B cell (primary cell): ENCODE measurements at regions of chr20 and their contacts with region 1.

Region 1: GRCh38 chr20:48620519-48621254 is 207.1 kb downstream of the PREX1 start:
- DNase-seq: peak; percentile 81
- ATAC-seq: peak; percentile 89
- H3K4me3 ChIP-seq: peak overlapping the region in 1 of 5 experiments; percentile 23
- H3K4me3 Mint-ChIP-seq: peak overlapping the region; percentile 75
- H3K27ac ChIP-seq: no peak overlapping the region
- H3K27ac Mint-ChIP-seq: peak overlapping the region; percentile 17
- H3K4me1 ChIP-seq: peaks cover 5 to 15% of the 10 kb centered on the region in 2 donors
- H3K4me1 Mint-ChIP-seq: peaks cover 8% of the 10 kb centered on the region
- H3K27me3 ChIP-seq: peaks cover 0 to 5% (median 0%) of the 10 kb centered on the region in 4 experiments
- H3K27me3 Mint-ChIP-seq: no peaks in the 10 kb centered on the region
- CTCF ChIP-seq: peak; percentile 93

Region 2: DNA sequence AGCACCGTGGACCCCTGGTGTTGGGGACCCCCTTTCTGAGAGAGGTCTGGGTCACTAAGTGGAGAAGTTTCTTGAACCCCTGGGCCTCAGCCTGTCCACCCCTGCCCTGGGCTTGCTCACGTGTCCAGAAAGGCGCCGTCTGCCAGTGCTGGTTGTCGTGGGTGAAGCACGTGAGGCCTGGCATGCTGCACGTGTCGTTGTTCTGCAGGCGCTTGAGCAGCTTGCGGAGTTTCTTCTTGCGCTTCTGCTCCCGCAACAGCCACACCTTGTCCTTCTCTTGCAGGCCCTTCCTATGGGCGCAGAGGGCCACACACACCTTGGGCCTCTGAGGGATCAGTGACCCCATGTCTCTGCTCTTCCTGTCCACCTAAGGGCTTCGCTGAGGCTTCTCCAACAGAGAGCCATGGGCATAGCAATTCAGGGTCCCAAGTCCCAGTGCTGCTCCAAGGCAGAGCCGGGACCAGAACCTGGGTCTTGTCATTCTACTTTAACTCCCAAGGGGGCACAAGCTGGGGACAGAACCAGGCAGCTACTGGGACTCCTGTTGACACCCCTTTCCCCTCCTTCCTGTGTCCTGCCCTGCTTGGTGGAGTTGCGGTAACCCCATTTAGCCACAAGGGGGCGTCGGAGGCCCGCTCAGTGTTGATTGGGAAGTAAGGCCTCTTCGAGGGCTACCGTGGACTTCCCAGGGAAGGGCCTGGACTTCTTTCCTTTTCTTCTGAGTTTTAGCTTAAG is 957.2 kb before region 1 on chr20:
- CTCF ChIA-PET with region 1: interaction called, 103 read pairs
- POLR2A ChIA-PET with region 1: no interaction called
- intact Hi-C with region 1: no loop called
- DNase-seq: peak; percentile 82
- ATAC-seq: peak; percentile 84
- H3K4me3 ChIP-seq: no peak overlapping the region
- H3K4me3 Mint-ChIP-seq: no peak overlapping the region
- H3K27ac ChIP-seq: no peak overlapping the region
- H3K27ac Mint-ChIP-seq: peak overlapping the region; percentile 78
- H3K4me1 ChIP-seq: peaks cover 0 to 7% of the 10 kb centered on the region in 2 donors
- H3K4me1 Mint-ChIP-seq: peaks cover 7% of the 10 kb centered on the region
- H3K27me3 ChIP-seq: no peaks in the 10 kb centered on the region
- H3K27me3 Mint-ChIP-seq: no peaks in the 10 kb centered on the region
- CTCF ChIP-seq: peak; percentile 96

Region 3: GRCh38 chr20:47719621-47720020 is 901.1 kb before region 1 on chr20:
- CTCF ChIA-PET with region 1: interaction called, 124 read pairs
- POLR2A ChIA-PET with region 1: no interaction called
- intact Hi-C with region 1: no loop called
- DNase-seq: no peak
- ATAC-seq: no peak
- H3K4me3 ChIP-seq: no peak overlapping the region
- H3K4me3 Mint-ChIP-seq: no peak overlapping the region
- H3K27ac ChIP-seq: no peak overlapping the region
- H3K27ac Mint-ChIP-seq: no peak overlapping the region
- H3K4me1 ChIP-seq: no peaks in the 10 kb centered on the region
- H3K4me1 Mint-ChIP-seq: peaks cover 7% of the 10 kb centered on the region
- H3K27me3 ChIP-seq: no peaks in the 10 kb centered on the region
- H3K27me3 Mint-ChIP-seq: peaks cover 9% of the 10 kb centered on the region
- CTCF ChIP-seq: no peak

Region 4: DNA sequence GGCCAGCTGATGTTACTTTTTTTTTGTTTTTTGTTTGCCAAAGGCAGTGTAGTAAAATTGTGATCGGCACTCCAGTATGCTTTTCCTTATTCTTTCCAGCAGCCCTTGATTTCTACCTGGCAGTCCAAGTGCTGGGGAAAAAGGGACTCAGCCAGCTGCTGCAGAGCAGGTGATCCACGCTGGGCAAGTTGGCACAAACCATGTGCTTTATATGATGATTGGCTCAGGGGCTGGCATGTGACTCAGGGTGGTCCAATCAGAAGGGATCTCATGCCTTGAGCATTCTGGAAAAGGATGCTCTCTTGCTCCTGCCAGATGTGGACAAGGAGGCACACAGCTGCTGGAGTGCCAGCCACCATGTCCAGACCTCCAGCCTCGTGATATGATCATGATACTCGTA is 889.9 kb before region 1 on chr20:
- CTCF ChIA-PET with region 1: interaction called, 124 read pairs
- POLR2A ChIA-PET with region 1: interaction called, 3 read pairs
- intact Hi-C with region 1: no loop called
- DNase-seq: no peak
- ATAC-seq: no peak
- H3K4me3 ChIP-seq: no peak overlapping the region
- H3K4me3 Mint-ChIP-seq: no peak overlapping the region
- H3K27ac ChIP-seq: no peak overlapping the region
- H3K27ac Mint-ChIP-seq: no peak overlapping the region
- H3K4me1 ChIP-seq: peaks cover 35 to 48% of the 10 kb centered on the region in 2 donors
- H3K4me1 Mint-ChIP-seq: peaks cover 46% of the 10 kb centered on the region
- H3K27me3 ChIP-seq: no peaks in the 10 kb centered on the region
- H3K27me3 Mint-ChIP-seq: no peaks in the 10 kb centered on the region
- CTCF ChIP-seq: no peak

Region 5: DNA sequence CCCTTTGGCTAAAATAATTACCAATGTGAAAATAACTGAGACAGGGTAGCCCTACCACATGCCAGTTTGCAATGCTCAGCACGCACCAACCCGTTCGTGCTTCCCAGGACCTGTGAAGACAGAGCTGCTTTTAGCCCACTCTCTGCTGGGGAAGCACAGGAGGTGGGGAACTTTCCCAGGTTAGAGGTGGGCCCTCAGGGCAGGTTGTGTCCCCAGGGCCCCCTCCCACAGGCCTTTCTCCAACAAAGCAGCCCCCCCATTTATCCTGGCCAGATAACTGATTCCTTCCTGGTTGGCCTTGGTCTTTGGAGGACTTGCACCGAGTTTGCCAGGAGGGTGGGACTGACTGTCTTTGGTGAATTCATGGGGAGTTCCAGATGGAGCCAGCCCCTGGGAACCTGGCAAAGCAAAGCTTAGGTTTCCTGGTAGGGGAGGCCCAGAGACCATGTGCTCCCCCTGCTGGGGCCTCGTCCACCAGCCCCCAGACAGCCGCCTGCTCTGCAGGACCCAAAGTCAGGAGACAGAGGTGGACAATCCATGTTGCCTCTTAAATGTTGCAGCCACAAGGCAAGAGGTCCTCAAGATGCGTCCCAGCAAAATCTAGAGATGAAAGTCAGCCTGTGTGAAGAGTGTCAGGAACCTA is 290.9 kb before region 1 on chr20:
- CTCF ChIA-PET with region 1: interaction called, 10 read pairs
- POLR2A ChIA-PET with region 1: no interaction called
- intact Hi-C with region 1: no loop called
- DNase-seq: no peak
- ATAC-seq: peak; percentile 31
- H3K4me3 ChIP-seq: no peak overlapping the region
- H3K4me3 Mint-ChIP-seq: no peak overlapping the region
- H3K27ac ChIP-seq: no peak overlapping the region
- H3K27ac Mint-ChIP-seq: no peak overlapping the region
- H3K4me1 ChIP-seq: no peaks in the 10 kb centered on the region
- H3K4me1 Mint-ChIP-seq: no peaks in the 10 kb centered on the region
- H3K27me3 ChIP-seq: peaks cover 0 to 14% (median 0%) of the 10 kb centered on the region in 4 experiments
- H3K27me3 Mint-ChIP-seq: peaks cover 25% of the 10 kb centered on the region
- CTCF ChIP-seq: no peak